ENCODE measurements at regions of chr12 and their contacts with region 1.

Region 1: GRCh38 chr12:116194935-116195431 is 82.5 kb downstream of the MED13L start:
- DNase-seq: peak; percentile 45
- CTCF ChIP-seq: peak; percentile 19

Region 2: GRCh38 chr12:116142936-116143898 is 51.8 kb before region 1 on chr12:
- CTCF ChIA-PET with region 1: interaction called, 10 read pairs
- POLR2A ChIA-PET with region 1: no interaction called
- DNase-seq: no peak
- CTCF ChIP-seq: no peak